Astrocyte of the cerebellum (primary cell): ENCODE measurements at regions of chr4 and their contacts with region 1.

Region 1: DNA sequence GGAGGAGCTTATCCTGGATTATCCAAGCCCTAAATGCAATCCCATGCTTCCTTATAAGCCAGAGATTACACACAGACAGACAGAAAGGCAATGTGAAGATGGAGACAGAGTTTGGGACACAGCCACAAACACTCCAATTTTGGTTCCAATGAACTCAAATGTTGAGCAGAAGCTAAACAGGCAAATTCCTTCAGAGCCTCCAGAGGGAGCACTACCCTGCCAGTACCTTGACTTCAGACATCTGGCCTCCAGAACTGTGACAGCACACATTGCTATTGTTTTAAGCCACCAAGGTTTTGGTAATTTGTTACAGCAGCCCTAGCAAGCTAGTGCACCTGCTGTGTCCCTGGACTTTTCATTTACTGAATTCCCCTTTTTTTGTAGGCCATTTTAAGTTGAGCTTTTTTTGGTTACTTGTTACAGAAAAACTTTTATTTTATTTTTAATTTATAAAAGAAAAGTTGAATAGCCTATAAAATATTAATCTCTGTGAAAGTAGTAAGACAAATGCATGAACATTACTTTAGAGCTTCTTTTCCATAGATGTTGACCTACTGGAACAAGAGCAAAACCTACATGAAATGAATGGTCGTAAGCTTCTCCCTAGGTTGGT is 33.4 kb upstream of the SRD5A3 start:
- DNase-seq: no peak
- H3K4me3 ChIP-seq: no peak overlapping the region
- CTCF ChIP-seq: peak; percentile 83

Region 2: DNA sequence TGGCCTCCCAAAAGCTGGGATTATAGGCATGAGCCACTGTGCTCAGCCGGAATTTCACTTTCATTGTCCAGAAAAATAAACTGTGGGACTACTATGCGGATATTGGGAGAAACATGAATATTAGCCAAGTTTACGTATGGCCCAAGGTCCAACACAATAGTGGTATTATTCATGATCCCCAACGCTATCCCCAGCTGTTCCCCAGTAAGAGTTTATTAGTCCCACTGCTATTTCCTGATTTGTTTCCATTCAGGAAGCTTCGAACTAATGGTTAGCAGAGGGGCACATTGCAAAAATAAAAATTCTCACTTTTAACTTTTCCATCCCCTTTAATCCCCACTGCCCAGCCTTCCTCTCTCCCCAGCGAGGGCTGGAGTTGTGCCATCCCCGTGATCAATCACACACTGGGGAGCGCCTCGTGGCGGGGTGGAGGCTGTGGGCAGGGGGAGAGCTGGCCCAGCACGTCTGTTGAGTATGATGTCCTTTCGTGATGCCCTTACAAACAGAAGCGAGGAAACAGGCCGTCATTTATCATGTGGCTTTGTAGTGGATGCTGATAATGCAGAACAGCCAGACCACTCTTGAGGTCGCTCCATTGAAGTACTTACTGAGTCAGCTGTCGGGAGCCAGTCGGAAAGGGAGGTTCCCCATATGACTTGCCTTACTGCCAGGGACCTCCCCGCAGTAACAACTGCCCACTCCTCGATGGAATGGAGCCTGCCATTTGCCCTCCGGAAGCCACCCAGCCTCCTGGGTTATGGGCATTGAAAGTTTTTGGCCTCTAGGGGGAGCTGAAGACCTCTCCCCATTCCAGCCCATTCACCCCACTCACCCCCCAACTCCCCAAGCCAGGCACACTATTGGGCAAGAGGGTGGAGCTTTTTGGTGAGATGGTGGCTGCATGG is 304.2 kb before region 1 on chr4:
- in situ Hi-C with region 1: loop called (anchors 25 kb)
- DNase-seq: no peak
- H3K4me3 ChIP-seq: no peak overlapping the region
- CTCF ChIP-seq: peak; percentile 23

Region 3: DNA sequence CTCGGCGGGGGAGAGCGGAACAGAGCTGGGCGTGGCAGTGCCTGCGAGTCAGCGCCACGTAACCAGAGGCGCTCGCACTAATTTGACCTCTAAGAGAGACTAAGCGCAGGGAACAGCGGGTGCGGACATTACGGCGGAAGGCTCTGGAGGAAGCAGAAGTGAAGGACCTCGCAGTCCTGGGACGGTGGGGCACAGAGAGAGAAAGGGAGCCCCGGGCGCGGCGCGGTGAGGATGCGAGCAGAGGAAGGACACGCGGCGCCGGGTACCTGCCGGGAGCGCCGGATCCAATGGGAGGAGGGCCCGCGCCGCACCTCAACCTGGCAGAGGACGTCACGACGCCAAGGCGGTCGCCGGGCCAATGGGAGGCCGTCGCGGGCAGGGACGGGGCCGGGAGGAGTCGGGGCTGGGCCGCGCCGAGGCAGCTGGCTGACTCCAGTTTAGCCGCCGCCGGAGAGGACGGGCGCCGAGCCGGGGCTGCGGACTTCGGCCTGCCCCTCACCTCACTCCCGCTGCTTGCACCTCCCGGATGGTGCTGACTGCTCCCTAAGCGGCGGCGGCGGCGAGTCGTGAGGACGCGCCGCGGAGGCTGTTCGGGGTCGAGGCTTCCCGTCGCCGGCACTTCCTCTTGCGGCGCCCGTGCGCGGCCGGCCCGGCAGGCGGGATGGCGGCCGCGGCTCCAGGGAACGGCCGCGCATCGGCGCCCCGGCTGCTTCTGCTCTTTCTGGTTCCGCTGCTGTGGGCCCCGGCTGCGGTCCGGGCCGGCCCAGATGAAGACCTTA is 83.1 kb after region 1 on chr4 and contains the start of gene TMEM165:
- in situ Hi-C with region 1: loop called (anchors 5 kb)
- DNase-seq: peak; percentile 48
- H3K4me3 ChIP-seq: peak within 1 kb of the TSS; percentile 86
- CTCF ChIP-seq: no peak